CD8-positive, alpha-beta T cell (primary cell): ENCODE measurements at regions of chr16 and their contacts with region 1.

Region 1: GRCh38 chr16:58392215-58393137 is at the start of gene GINS3:
- DNase-seq: peak; percentile 62 to 90 (median 83)
- ATAC-seq: peak; percentile 97
- H3K4me3 ChIP-seq: peak within 1 kb of the TSS; percentile 96 to 98
- H3K4me3 Mint-ChIP-seq: peak within 1 kb of the TSS; percentile 100
- H3K27ac ChIP-seq: peak within 1 kb of the TSS; percentile 69 to 79
- H3K27ac Mint-ChIP-seq: peak within 1 kb of the TSS; percentile 97
- H3K4me1 ChIP-seq: peaks cover 6% of the 10 kb centered on the region
- H3K4me1 Mint-ChIP-seq: peaks cover 16% of the 10 kb centered on the region
- H3K27me3 ChIP-seq: no peaks in the 10 kb centered on the region
- H3K27me3 Mint-ChIP-seq: no peaks in the 10 kb centered on the region
- CTCF ChIP-seq: no peak
- total RNA-seq, gene GINS3: 0.54 to 1.1 TPM

Region 2: DNA sequence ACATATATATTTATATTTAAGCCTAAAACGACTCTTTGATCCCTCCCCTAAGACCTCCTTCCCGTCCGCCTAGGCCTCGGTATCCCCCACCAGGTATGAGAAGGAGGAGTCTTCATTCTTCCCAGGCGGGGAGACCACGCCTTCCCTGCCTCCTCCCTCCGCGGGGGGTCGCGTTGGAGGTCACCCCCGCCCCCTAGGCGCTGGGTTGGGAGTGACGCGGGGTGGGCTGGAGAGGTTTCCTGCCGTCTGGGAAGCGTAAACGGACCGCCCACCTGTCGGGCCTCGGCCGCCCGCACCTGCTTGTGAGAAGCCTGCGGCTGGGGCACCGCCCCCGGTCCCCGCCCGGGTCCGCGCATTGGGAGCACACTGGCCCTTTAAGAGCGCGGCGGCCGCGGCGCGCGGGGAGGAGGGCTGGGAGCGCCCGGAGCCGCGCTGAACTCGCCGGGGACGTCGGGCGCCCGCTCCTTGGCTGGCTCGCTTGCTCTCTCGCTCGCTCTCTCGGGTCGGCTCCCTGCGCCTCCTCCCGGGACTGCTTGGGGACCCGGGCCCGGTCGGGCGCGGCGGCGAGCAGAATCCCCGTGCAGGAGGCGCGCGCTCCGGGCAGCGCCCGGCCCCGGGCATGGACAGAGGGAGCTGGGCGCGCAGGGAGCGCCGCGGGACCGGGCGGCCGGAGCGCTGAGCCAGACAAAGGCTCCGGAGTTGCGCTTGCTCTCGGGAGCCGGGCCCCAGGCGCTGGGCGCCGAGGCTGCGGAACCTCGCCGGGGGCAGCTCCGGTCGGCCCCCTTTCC is 366.9 kb before region 1 on chr16 and contains the start of gene MMP15:
- CTCF ChIA-PET with region 1: no interaction called
- POLR2A ChIA-PET with region 1: no interaction called
- intact Hi-C with region 1: loop called in 1 of 2 experiments (anchors 10 kb)
- DNase-seq: peak in 8 of 9 experiments; percentile 39 to 71 (median 60)
- ATAC-seq: peak; percentile 65
- H3K4me3 ChIP-seq: peak within 1 kb of the TSS; percentile 60 to 66
- H3K4me3 Mint-ChIP-seq: peak within 1 kb of the TSS; percentile 90
- H3K27ac ChIP-seq: peak within 1 kb of the TSS in 1 of 2 experiments; percentile 18
- H3K27ac Mint-ChIP-seq: peak within 1 kb of the TSS; percentile 83
- H3K4me1 ChIP-seq: peaks cover 8% of the 10 kb centered on the region
- H3K4me1 Mint-ChIP-seq: peaks cover 13% of the 10 kb centered on the region
- H3K27me3 ChIP-seq: peaks cover 0 to 10% of the 10 kb centered on the region in 2 experiments
- H3K27me3 Mint-ChIP-seq: peaks cover 6% of the 10 kb centered on the region
- CTCF ChIP-seq: no peak
- total RNA-seq, gene MMP15: 0.19 to 0.92 TPM

Region 3: DNA sequence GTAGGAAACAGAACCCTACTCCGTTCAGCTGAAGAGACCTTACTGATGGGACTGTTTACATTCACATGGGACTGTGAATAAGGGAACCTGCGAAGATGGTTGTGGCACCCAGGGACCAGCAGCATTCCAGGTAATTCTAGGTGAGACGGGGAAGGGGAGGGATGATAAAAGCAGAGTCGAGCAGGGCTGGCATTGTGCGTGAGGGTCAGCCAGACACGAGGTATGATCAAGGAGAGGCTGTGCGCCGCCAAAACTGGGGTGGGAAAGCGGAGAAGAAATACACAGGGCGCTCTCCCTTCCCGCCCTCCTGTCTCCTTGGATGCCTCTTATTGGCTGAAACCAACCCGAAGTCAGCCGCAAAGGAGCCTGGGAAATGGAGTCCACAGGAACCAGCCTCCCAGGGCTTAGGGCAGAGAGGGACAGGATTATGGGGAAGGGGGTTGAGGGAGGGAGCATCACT is 156.2 kb before region 1 on chr16:
- CTCF ChIA-PET with region 1: no interaction called
- POLR2A ChIA-PET with region 1: no interaction called
- intact Hi-C with region 1: loop called in 1 of 2 experiments (anchors 1 kb)
- DNase-seq: peak; percentile 10 to 76 (median 64)
- ATAC-seq: peak; percentile 94
- H3K4me3 ChIP-seq: peak overlapping the region; percentile 47 to 56
- H3K4me3 Mint-ChIP-seq: peak overlapping the region; percentile 80
- H3K27ac ChIP-seq: no peak overlapping the region
- H3K27ac Mint-ChIP-seq: no peak overlapping the region
- H3K4me1 ChIP-seq: no peaks in the 10 kb centered on the region
- H3K4me1 Mint-ChIP-seq: peaks cover 9% of the 10 kb centered on the region
- H3K27me3 ChIP-seq: peaks cover 0 to 5% of the 10 kb centered on the region in 2 experiments
- H3K27me3 Mint-ChIP-seq: peaks cover 14% of the 10 kb centered on the region
- CTCF ChIP-seq: no peak

Region 4: GRCh38 chr16:58515125-58515870 is 122.8 kb after region 1 on chr16 and contains the start of gene SETD6:
- CTCF ChIA-PET with region 1: no interaction called
- POLR2A ChIA-PET with region 1: interaction called, 3 read pairs
- intact Hi-C with region 1: loop called (anchors 1 to 2 kb)
- DNase-seq: peak; percentile 25 to 81 (median 68)
- ATAC-seq: peak; percentile 59
- H3K4me3 ChIP-seq: peak within 1 kb of the TSS; percentile 72 to 92
- H3K4me3 Mint-ChIP-seq: peak within 1 kb of the TSS; percentile 90
- H3K27ac ChIP-seq: peak within 1 kb of the TSS; percentile 64 to 73
- H3K27ac Mint-ChIP-seq: peak within 1 kb of the TSS; percentile 80
- H3K4me1 ChIP-seq: peaks cover 13% of the 10 kb centered on the region
- H3K4me1 Mint-ChIP-seq: peaks cover 20% of the 10 kb centered on the region
- H3K27me3 ChIP-seq: no peaks in the 10 kb centered on the region
- H3K27me3 Mint-ChIP-seq: no peaks in the 10 kb centered on the region
- CTCF ChIP-seq: no peak
- total RNA-seq, gene SETD6: 17.3 to 17.4 TPM

Region 5: DNA sequence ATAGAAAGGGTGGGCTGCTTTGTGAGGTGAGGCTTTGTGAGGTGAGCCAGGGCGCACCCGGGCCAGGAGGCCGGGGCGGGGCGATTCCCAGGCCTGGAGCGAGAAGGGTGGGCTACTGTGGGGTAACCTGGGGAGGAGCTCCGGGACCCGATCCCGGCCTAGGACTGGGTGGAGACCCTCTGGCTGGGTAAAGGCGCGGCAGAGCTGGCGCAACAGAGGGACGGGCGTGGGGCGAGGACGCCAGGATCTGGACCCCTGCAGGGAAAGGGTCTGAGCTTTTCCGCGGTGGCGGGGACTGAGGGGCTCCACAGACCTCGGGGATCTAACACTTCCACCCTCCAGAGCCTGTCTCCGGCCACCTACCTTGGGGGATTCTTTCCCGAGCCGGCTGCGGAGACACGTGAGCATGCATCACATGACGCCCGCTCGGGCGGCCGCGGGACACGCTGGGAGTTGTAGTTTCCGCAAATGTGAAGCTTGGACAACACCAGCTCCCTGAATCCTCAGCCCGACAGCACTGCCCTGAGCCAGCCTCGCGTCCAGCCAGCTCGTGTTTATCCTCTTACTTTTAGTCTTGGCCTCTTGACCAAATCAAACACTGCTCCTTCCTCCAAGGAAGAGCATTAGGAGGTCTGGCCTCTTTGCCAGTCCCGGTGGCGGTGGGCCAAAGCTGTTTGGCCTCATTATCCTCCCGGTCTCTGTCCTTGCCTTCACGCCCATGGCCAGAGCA is 292.0 kb after region 1 on chr16 and contains the start of gene SLC38A7:
- CTCF ChIA-PET with region 1: no interaction called
- POLR2A ChIA-PET with region 1: no interaction called
- intact Hi-C with region 1: loop called in 1 of 2 experiments (anchors 2 kb)
- DNase-seq: peak; percentile 43 to 81 (median 69)
- ATAC-seq: peak; percentile 88
- H3K4me3 ChIP-seq: peak within 1 kb of the TSS; percentile 76 to 95
- H3K4me3 Mint-ChIP-seq: peak within 1 kb of the TSS; percentile 91
- H3K27ac ChIP-seq: peak within 1 kb of the TSS; percentile 47 to 51
- H3K27ac Mint-ChIP-seq: peak within 1 kb of the TSS; percentile 80
- H3K4me1 ChIP-seq: peaks cover 19% of the 10 kb centered on the region
- H3K4me1 Mint-ChIP-seq: peaks cover 22% of the 10 kb centered on the region
- H3K27me3 ChIP-seq: no peaks in the 10 kb centered on the region
- H3K27me3 Mint-ChIP-seq: no peaks in the 10 kb centered on the region
- CTCF ChIP-seq: no peak
- total RNA-seq, gene SLC38A7: 3.7 to 4.6 TPM